Activated CD4-positive, alpha-beta memory T cell treated with anti-CD3 and anti-CD28 coated beads, Interleukin-2, amount 10 ng/mL, durations not matched to agents 7 days and 5 days (primary cell): ENCODE measurements at regions of chr6 and their contacts with region 1.

Region 1: GRCh38 chr6:151323791-151324487 is 67.4 kb downstream of the ZBTB2 start:
- DNase-seq: peak; percentile 76
- H3K4me3 Mint-ChIP-seq: no peak overlapping the region
- H3K27ac Mint-ChIP-seq: no peak overlapping the region
- H3K4me1 Mint-ChIP-seq: peaks cover 23% of the 10 kb centered on the region
- H3K27me3 Mint-ChIP-seq: peaks cover 57% of the 10 kb centered on the region

Region 2: GRCh38 chr6:150891888-150892485 is 432.0 kb before region 1 on chr6:
- CTCF ChIA-PET with region 1: interaction called, 247 read pairs
- POLR2A ChIA-PET with region 1: interaction called, 13 read pairs
- DNase-seq: peak; percentile 67
- H3K4me3 Mint-ChIP-seq: no peak overlapping the region
- H3K27ac Mint-ChIP-seq: peak overlapping the region; percentile 16
- H3K4me1 Mint-ChIP-seq: peaks cover 49% of the 10 kb centered on the region
- H3K27me3 Mint-ChIP-seq: no peaks in the 10 kb centered on the region

Region 3: GRCh38 chr6:151014404-151015100 is 309.4 kb before region 1 on chr6:
- CTCF ChIA-PET with region 1: interaction called, 200 read pairs
- POLR2A ChIA-PET with region 1: interaction called, 17 read pairs
- DNase-seq: peak; percentile 62
- H3K4me3 Mint-ChIP-seq: no peak overlapping the region
- H3K27ac Mint-ChIP-seq: peak overlapping the region; percentile 14
- H3K4me1 Mint-ChIP-seq: peaks cover 13% of the 10 kb centered on the region
- H3K27me3 Mint-ChIP-seq: no peaks in the 10 kb centered on the region

Region 4: DNA sequence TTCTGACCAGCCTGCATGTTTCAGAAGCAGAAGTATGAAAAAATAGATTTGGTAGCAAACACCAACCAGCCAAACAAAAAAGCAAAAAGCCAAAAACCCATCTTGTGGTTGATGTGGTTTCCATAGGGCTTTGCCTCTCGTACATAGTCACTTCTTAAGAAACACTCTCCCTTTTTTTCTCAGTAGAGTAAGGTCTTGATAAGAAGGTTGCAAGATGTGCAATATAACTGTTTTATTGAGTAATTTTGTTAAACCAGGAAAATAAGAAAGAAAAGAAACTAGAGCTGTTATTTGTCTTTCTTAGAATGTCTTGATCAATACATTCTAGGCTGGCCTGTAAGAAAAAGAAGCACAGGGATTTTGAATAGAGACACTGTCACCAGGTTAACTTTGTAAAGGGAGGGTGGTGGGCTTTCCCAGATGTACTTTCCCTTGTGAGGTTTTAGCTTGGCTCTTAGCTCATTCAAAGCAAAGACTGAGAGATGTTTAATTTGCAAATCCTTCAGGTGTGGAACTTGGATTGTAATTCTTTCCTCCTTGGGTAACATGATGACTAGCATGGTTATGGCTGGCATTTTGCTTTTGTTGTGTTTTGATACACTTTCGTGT is 34.4 kb before region 1 on chr6:
- CTCF ChIA-PET with region 1: interaction called, 10 read pairs
- POLR2A ChIA-PET with region 1: no interaction called
- DNase-seq: peak; percentile 20
- H3K4me3 Mint-ChIP-seq: no peak overlapping the region
- H3K27ac Mint-ChIP-seq: peak overlapping the region; percentile 4
- H3K4me1 Mint-ChIP-seq: peaks cover 40% of the 10 kb centered on the region
- H3K27me3 Mint-ChIP-seq: peaks cover 75% of the 10 kb centered on the region

Region 5: DNA sequence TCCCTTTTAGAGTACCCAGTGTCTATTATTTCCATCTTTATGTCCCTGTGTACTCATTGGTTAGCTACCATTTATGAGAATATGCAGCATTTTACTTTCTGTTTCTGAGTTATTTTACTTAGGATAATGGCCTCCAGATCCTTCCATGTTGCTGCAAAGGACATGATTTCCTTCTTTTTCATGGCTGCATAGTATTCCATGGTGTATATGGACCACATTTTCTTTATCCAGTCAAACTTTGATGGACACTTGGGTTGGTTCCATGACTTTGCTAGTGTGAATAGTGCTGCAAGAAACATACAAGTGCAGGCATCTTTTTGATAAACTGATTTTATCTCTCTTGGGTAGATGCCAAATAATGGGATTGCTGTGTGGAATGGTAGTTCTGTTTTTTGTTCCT is 12.0 kb after region 1 on chr6:
- CTCF ChIA-PET with region 1: interaction called, 58 read pairs
- POLR2A ChIA-PET with region 1: interaction called, 3 read pairs
- DNase-seq: no peak
- H3K4me3 Mint-ChIP-seq: no peak overlapping the region
- H3K27ac Mint-ChIP-seq: no peak overlapping the region
- H3K4me1 Mint-ChIP-seq: no peaks in the 10 kb centered on the region
- H3K27me3 Mint-ChIP-seq: peaks cover 19% of the 10 kb centered on the region

Region 6: DNA sequence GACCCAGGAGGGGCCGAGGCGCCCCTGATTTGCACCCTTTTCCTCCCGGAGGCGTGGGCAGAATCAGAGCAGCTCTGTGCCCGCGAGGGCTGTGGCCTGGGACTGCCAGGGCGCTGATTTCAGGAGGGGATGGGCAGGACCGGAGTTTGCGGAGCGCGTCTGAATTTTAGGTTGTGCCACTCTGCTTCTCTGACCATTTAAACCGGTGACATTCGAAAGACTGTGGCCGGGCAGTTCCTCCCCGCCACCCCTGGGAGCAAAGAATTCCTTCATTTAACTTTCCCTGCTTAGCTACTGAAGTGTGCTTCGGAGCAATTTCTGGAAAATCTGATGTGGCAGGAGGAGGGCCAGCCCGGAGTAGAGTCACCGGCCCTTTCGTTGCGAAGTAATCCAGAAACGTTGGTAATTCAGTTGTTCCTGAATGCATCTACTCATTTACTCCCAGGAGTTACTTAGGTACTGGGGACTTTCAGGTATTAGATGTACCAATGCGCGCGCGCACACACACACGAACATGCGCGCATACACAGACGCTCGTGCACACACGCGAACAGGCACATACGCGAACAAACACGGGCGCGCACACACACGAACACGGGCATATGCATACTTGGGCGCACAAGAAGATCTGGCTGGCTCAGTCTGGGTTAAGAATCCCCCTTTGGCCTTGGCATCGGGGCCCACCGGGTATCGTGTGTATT is 170.4 kb after region 1 on chr6:
- CTCF ChIA-PET with region 1: no interaction called
- POLR2A ChIA-PET with region 1: no interaction called
- DNase-seq: peak; percentile 35
- H3K4me3 Mint-ChIP-seq: peak overlapping the region; percentile 68
- H3K27ac Mint-ChIP-seq: no peak overlapping the region
- H3K4me1 Mint-ChIP-seq: peaks cover 17% of the 10 kb centered on the region
- H3K27me3 Mint-ChIP-seq: peaks cover 49% of the 10 kb centered on the region

Region 7: DNA sequence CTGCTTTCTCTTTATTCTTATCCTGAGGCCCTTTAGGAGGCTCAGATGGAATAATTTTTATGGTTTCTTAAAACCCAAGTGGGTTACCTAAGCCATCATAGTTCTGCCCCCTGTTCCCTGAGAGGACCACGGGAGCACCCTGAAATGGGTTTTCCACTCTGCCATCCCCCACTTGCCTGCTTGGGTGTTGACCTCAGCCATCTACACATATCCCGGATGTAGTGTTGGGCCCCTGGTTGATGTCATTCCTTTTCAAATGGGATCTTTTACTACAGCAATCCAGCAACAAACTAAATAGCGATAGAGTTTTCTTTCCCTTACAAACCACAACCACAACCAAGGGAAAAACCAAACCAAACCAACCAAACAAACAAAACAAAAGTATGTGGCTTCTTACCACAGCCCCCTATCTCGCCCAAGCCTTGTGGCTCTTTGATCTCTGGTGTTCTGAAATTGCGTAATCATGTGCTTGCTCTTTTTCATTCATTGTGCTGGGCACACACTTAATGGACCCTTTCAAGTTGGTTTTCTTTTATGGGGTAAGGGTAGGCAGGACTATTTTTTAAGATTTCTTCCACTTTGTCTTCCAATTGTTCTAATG is 638.4 kb after region 1 on chr6:
- CTCF ChIA-PET with region 1: no interaction called
- POLR2A ChIA-PET with region 1: no interaction called
- DNase-seq: no peak
- H3K4me3 Mint-ChIP-seq: no peak overlapping the region
- H3K27ac Mint-ChIP-seq: no peak overlapping the region
- H3K4me1 Mint-ChIP-seq: peaks cover 20% of the 10 kb centered on the region
- H3K27me3 Mint-ChIP-seq: peaks cover 56% of the 10 kb centered on the region